Activated B cell treated with CpG ODN at 0.5 μM for 24 hours (primary cell): ENCODE measurements at regions of chr18 and their contacts with region 1.

Region 1: DNA sequence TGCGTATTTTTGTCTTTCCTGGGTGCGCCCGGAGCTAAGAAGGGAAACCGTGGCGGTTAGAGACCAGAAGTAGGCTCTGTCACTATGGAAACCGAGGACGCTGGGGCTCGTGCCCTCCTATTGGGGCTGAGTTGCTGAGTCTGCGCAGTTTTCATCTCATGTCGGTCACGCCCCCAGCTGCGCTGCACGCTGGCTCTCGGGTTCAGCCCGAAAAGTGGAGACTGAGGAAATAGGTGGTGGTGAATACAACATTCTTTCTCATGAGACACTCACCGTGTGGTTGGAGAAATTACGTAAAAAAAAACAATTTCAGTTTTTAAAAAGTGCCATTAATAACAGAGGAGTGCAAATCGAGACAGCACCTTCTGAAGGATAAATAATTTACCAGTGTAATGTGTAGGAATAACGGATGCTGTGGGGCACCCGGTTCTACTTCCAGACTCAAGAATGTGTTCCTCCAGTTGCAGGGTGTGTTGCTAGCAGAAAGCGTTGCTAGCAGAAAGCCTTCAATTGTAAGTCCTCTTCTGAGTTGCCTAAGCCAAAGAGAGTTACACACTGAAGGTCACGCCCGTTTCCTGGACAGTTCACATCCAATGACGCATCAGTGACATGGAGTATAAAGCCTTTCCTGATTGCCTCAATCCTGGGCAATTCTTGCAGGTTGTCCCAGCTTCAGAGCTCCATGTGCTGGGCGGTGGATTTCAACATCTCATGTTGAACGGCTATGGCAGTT is 20.4 kb upstream of the CXXC1 start:
- DNase-seq: peak; percentile 68
- ATAC-seq: peak; percentile 97
- H3K4me3 Mint-ChIP-seq: peak overlapping the region; percentile 88
- H3K27ac Mint-ChIP-seq: peak overlapping the region; percentile 66
- H3K4me1 Mint-ChIP-seq: peaks cover 46% of the 10 kb centered on the region
- H3K27me3 Mint-ChIP-seq: no peaks in the 10 kb centered on the region
- CTCF ChIP-seq: no peak

Region 2: DNA sequence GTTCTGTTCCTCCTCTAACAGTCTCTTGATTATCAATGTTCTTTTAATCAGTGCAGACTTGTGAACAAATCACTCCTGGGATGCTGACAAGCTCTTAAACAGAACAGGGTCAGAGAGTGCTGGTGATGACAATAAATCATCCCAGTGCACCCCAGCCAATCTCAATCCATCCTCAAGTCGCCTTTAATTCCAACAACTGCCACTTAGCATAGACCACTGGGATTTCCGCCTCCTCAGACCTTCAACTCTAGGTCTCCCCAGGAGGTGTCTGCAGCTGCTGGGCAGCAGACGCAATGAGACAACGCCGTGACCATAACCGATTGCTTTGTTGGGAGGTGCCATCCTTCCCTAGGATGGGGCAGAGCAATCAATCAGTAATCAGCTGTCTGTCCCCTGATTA is 310.3 kb before region 1 on chr18:
- CTCF ChIA-PET with region 1: no interaction called
- POLR2A ChIA-PET with region 1: no interaction called
- intact Hi-C with region 1: no loop called
- DNase-seq: no peak
- ATAC-seq: no peak
- H3K4me3 Mint-ChIP-seq: no peak overlapping the region
- H3K27ac Mint-ChIP-seq: no peak overlapping the region
- H3K4me1 Mint-ChIP-seq: no peaks in the 10 kb centered on the region
- H3K27me3 Mint-ChIP-seq: peaks cover 6% of the 10 kb centered on the region
- CTCF ChIP-seq: no peak

Region 3: GRCh38 chr18:50297621-50298442 is 10.1 kb before region 1 on chr18:
- CTCF ChIA-PET with region 1: no interaction called
- POLR2A ChIA-PET with region 1: interaction called, 17 read pairs
- intact Hi-C with region 1: loop called (anchors 1 kb)
- DNase-seq: peak; percentile 73
- ATAC-seq: peak; percentile 99
- H3K4me3 Mint-ChIP-seq: peak overlapping the region; percentile 83
- H3K27ac Mint-ChIP-seq: peak overlapping the region; percentile 41
- H3K4me1 Mint-ChIP-seq: peaks cover 14% of the 10 kb centered on the region
- H3K27me3 Mint-ChIP-seq: no peaks in the 10 kb centered on the region
- CTCF ChIP-seq: no peak

Region 4: DNA sequence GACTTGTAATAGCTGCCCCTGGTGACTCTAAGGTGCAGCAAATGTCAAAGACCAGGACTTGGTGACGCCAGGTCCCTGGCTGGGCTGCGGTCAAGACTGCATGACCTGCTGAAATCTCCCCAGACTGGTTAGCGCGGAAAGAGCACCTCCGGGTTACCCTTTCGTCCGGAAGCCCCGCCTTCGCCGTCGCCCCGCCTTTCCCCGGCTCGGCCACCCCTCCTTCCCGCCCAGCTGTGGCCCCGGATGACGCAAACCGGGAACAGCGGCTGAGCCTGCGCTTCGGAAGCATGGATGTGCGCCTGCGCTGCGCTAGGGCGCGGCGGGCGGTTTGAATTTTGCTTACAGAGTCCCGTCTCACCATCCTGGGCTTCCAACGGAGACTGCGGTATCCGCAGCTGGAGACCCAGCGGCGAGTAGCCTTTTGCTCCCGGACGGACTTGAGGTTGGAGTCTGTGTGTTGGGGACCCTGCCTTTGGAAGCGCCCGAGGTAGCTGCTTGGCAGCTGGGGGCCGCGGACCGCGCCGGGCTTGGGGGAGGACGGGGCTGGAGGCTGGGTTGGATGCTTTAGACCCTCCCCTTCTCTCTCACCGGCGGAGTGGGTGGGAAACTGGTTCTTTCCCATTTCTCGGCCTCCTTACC is 67.0 kb after region 1 on chr18 and contains the start of gene SKA1:
- CTCF ChIA-PET with region 1: no interaction called
- POLR2A ChIA-PET with region 1: no interaction called
- intact Hi-C with region 1: loop called (anchors 2 kb)
- DNase-seq: peak; percentile 85
- ATAC-seq: peak; percentile 100
- H3K4me3 Mint-ChIP-seq: peak within 1 kb of the TSS; percentile 83
- H3K27ac Mint-ChIP-seq: peak within 1 kb of the TSS; percentile 84
- H3K4me1 Mint-ChIP-seq: peaks cover 14% of the 10 kb centered on the region
- H3K27me3 Mint-ChIP-seq: peaks cover 6% of the 10 kb centered on the region
- CTCF ChIP-seq: no peak
- total RNA-seq, gene SKA1: 0.71 and 1.0 TPM in 2 replicates